ENCODE measurements at regions of chr19 and their contacts with region 1.

Region 1: DNA sequence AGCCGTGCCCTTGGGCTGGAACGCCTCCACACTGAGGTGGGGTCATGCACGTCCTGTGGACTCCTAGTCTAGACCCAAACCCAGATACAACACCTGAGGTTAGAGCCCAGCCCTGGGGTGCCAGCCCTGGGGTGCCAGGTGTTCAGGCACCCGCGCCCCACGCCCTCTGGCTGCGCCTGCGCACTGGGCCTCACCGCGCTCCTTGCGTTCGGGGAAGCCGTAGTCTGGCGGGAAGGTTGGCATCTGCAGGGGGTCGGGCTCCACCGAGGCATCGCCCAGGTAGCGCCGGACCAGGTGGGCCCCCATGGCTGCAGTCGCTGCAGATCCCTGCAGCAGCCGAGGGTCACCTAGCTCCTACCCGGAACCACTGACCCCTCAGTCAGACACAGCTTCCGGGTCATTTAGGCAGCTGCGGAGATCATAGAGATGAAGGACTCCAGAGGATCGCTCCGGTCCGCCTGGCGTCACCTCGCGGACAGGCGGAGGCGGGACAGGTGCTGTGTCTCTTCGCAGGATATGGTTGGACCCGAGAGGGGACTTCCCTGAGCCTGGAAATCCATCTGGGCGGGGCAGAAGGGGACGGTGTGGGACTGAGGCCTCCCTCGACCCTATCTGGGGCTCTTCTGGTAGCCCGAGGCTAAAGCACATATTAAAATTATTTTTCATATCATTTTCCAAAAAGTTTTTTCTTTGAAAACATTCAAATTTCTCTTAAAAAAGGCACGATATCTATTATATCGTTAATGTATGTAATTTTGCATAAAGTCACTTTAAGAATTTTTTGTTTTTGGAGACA is at the start of gene NDUFB7:
- DNase-seq: peak; percentile 91
- H3K4me3 ChIP-seq: peak within 1 kb of the TSS; percentile 92
- H3K27ac ChIP-seq: peak within 1 kb of the TSS; percentile 95
- H3K4me1 ChIP-seq: peaks cover 55% of the 10 kb centered on the region
- H3K27me3 ChIP-seq: no peaks in the 10 kb centered on the region
- CTCF ChIP-seq: peak; percentile 75
- total RNA-seq, gene NDUFB7: 501 TPM

Region 2: DNA sequence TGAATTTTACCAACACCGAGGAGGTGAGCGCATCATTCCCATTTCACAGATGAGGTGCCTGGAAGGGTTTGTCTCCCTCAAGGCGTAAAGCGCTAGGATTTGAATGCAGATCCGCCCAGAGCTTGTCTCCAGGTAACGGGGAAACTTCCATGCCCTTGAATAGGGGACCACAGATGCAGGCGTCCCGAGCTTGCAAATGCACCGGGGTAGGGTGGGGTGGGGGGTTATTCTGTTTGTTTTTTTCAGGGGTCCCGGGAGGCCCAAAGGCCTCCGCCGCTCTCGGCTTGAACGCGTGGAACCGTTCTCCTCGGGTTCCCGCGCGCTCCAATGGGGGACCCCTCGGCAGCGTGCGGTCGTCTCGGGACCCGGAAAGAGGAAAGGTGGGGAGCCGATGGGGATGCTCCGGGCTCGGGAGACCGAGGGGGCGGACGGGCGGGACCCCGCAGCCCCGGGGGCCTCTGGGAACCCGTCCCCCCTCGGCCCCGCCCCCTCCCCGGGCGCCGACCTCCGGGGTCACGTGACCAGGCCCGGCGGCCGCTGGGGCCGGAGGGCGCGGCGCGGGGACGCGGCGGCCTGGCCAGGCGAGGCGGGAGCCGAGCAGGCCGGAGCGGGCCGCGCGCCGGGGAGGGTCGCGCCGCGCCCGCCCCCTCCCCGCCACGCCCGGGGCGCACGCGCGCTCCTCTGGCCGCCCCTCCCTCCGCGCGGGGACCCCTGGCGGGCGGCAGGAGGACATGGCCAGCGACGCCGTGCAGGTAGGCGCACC is 138.9 kb before region 1 on chr19 and contains the start of gene PKN1:
- intact Hi-C with region 1: no loop called
- DNase-seq: peak; percentile 76
- H3K4me3 ChIP-seq: peak within 1 kb of the TSS; percentile 93
- H3K27ac ChIP-seq: peak within 1 kb of the TSS; percentile 97
- H3K4me1 ChIP-seq: peaks cover 59% of the 10 kb centered on the region
- H3K27me3 ChIP-seq: no peaks in the 10 kb centered on the region
- CTCF ChIP-seq: no peak
- total RNA-seq, gene PKN1: 129 TPM

Region 3: GRCh38 chr19:14746886-14747285 is 175.0 kb after region 1 on chr19:
- intact Hi-C with region 1: no loop called
- DNase-seq: no peak
- H3K4me3 ChIP-seq: no peak overlapping the region
- H3K27ac ChIP-seq: no peak overlapping the region
- H3K4me1 ChIP-seq: no peaks in the 10 kb centered on the region
- H3K27me3 ChIP-seq: no peaks in the 10 kb centered on the region
- CTCF ChIP-seq: no peak

Region 4: DNA sequence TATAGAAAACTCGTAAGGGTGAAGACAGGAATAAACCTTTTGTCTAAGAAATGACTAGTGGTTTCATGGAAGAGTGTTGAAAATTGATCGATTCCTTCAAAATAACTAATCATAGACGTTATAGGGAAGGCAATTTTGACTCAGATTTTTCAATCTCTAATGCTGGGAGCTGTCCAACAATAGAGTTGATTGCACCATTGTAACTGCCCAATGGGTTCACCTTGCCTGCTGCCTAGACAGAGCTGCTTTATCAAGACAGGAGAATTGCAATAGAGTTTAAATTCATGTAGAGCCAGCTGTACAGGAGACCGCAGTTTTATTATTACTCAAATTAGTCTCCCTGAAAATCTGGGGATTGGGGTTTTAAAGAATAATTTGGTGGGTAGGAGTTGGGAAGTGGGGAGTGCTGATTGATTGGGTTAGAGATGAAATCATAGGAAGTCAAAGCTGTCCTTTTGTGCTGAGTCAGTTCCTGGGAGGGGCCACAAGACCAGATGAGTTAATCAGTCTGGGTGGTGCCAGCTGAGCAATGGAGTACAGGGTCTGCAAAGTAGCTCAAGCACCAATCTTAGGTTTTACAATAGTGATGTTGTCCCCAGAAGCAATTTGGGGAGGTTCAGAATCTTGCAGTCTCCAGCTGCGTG is 223.3 kb after region 1 on chr19:
- intact Hi-C with region 1: no loop called
- DNase-seq: no peak
- H3K4me3 ChIP-seq: no peak overlapping the region
- H3K27ac ChIP-seq: no peak overlapping the region
- H3K4me1 ChIP-seq: no peaks in the 10 kb centered on the region
- H3K27me3 ChIP-seq: peaks cover 15% of the 10 kb centered on the region
- CTCF ChIP-seq: no peak

Region 5: DNA sequence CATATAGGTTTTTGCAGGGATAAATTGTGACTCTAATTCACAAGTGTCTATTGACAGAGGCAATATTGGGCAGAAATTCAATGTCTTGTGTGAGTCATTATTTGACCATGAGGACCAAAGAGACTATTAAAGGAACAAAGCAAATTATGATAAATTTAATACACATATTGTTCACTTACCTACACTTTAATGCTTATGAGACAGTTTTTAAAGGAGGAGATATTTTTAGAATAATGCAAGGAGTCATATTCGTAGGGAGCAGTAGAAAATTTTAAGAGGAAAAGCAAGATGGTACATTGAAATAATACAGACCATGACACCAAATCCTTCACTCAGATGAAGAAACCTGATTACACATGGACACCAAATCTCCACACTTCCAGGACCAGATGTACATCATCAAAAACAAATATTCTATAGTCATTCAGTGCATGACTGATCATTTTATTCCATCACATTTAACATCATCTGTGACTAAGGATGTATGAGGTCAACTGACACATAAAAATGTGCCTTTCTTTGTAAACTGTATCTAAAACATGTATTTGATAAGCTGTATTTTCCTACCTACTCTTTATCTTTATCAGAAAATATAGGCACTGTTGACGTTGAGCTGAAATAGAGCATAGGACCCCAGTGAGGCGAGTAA is 318.2 kb after region 1 on chr19:
- intact Hi-C with region 1: loop called (anchors 5 kb)
- DNase-seq: no peak
- H3K4me3 ChIP-seq: no peak overlapping the region
- H3K27ac ChIP-seq: no peak overlapping the region
- H3K4me1 ChIP-seq: peaks cover 11% of the 10 kb centered on the region
- H3K27me3 ChIP-seq: peaks cover 46% of the 10 kb centered on the region
- CTCF ChIP-seq: no peak